Activated B cell treated with CpG ODN at 0.5 μM for 24 hours (primary cell): ENCODE measurements at regions of chrX and their contacts with region 1.

Region 1: DNA sequence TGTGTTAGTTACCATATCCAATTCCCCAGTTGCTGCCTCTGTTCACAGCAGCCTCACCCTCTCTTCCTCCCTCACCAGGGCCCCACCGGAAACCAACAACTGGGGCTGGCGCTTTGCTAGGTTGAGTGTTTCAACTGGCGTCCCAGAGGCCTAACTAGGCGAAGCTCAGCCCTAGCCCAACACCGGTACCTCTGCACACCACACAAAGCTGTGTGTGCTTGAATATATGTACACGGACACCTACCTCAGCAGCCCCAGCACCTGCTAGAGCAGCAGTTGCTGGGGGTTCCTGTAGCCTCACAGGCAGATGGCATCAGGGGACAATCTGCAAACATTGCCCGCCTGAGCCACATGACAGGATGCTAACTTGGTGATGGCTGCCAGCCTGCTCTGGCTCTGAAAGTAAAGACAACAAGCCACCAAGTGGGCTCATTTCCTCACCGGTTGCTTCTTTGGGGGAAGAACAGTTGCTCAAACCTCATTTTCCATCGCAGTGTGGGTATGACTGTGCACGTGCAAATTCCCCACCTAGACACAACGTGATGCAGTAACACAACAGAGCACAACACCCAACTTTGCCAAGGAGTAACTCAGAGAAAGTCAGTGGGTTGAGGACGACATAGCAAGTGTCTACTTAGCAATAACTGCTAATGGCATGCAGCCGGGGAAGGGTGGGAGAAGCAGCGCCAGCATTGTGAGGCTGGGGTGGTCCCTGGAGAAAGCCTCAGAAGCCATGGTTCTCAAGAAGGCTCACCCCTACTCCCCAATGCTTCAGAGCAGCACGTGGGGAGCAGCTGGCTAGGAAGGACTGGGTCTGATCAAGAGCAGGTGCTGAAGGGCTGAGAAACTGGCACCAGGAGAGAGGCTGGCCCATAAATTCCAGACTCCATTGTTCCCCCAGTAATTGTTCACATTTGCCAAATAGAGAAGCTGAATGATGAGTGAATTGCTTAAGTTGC is 139.5 kb downstream of the SH3KBP1 start:
- DNase-seq: peak; percentile 43
- ATAC-seq: peak; percentile 65
- H3K4me3 Mint-ChIP-seq: peak overlapping the region; percentile 35
- H3K27ac Mint-ChIP-seq: peak overlapping the region; percentile 92
- H3K4me1 Mint-ChIP-seq: peaks cover 98% of the 10 kb centered on the region
- H3K27me3 Mint-ChIP-seq: no peaks in the 10 kb centered on the region
- CTCF ChIP-seq: no peak

Region 2: DNA sequence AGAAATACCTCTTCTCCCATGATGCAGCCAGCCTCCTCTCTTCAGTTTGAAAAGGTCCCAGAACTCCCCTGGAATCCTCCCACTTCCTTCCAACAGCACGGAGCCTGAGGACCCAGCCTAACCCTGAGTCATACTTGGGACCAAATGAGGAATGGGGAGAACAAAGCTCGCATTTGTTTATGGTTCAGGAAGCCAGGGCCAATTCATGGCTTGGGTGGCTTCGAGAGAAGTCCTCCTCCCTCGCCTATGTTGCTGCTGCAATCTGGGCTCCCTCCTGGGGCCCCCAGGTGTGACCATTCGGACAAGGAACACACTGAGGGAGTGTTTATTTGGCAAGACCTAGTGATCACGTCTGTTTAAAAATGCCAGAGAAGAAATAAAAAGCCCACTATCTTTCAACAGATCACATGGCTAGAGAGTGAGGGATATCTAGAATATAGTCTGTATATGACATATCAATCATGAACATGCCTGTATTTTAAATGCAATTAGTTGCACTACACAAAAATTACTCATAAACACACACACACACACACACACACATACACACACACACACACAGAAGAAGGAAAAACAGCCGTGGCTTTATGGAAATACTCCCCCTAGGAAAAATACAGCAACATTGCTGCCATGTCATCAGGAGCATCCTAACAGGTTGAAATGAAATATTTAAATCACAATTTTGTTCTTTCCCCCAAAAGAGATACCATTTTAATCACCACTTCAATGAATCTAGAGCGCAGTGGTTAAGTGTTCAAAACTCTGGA is 76.9 kb before region 1 on chrX:
- CTCF ChIA-PET with region 1: no interaction called
- POLR2A ChIA-PET with region 1: no interaction called
- intact Hi-C with region 1: no loop called
- DNase-seq: no peak
- ATAC-seq: no peak
- H3K4me3 Mint-ChIP-seq: no peak overlapping the region
- H3K27ac Mint-ChIP-seq: no peak overlapping the region
- H3K4me1 Mint-ChIP-seq: peaks cover 23% of the 10 kb centered on the region
- H3K27me3 Mint-ChIP-seq: no peaks in the 10 kb centered on the region
- CTCF ChIP-seq: no peak

Region 3: DNA sequence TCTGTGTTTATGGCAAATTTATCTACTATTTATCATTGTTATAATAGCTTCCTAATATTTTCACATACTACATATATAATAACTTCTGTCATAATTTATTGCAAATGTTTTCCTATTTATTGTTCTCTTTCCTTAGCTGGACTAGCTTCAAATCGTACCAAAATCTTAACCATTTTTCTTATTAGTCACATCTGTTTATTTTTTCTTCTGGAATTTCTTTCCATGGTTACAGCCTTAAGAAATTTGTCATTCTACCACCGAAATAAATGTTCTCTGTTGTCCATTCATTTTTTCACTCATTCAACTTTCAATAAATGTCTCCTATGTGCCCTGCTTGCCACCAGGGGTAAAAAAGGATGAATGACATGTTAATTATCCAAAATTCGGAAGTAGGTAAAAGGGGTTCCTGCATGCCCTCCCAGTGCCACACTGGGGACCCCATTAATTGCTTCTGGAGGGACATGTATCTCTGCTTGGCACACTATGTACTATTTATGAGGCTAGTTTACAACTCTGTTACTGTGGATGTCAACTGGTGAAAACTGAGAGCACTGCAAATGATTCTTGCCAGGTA is 42.6 kb before region 1 on chrX:
- CTCF ChIA-PET with region 1: no interaction called
- POLR2A ChIA-PET with region 1: no interaction called
- intact Hi-C with region 1: no loop called
- DNase-seq: no peak
- ATAC-seq: no peak
- H3K4me3 Mint-ChIP-seq: no peak overlapping the region
- H3K27ac Mint-ChIP-seq: no peak overlapping the region
- H3K4me1 Mint-ChIP-seq: peaks cover 15% of the 10 kb centered on the region
- H3K27me3 Mint-ChIP-seq: no peaks in the 10 kb centered on the region
- CTCF ChIP-seq: no peak

Region 4: DNA sequence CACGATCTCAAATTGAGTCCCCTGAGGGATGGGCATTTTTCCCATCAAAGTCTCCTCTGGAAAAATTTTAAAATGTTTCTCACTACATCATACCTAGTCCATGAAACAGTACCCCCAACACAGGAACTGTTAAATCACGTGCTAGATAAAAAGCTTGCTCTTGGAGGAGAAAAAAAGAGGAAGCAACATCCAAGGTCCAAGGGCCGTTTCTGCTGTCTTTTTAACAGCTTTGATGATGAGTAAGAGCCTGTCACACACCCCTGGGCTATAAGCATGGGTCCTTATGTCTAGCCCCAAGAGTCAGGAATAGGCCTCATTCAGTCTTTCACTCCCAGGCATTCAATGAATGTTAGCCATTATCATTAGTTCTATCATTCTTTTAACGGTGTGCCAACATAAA is 10.6 kb after region 1 on chrX:
- CTCF ChIA-PET with region 1: interaction called, 3 read pairs
- POLR2A ChIA-PET with region 1: interaction called, 6 read pairs
- intact Hi-C with region 1: loop called (anchors 1 kb)
- DNase-seq: no peak
- ATAC-seq: peak; percentile 85
- H3K4me3 Mint-ChIP-seq: no peak overlapping the region
- H3K27ac Mint-ChIP-seq: peak overlapping the region; percentile 72
- H3K4me1 Mint-ChIP-seq: peaks cover 77% of the 10 kb centered on the region
- H3K27me3 Mint-ChIP-seq: no peaks in the 10 kb centered on the region
- CTCF ChIP-seq: no peak

Region 5: DNA sequence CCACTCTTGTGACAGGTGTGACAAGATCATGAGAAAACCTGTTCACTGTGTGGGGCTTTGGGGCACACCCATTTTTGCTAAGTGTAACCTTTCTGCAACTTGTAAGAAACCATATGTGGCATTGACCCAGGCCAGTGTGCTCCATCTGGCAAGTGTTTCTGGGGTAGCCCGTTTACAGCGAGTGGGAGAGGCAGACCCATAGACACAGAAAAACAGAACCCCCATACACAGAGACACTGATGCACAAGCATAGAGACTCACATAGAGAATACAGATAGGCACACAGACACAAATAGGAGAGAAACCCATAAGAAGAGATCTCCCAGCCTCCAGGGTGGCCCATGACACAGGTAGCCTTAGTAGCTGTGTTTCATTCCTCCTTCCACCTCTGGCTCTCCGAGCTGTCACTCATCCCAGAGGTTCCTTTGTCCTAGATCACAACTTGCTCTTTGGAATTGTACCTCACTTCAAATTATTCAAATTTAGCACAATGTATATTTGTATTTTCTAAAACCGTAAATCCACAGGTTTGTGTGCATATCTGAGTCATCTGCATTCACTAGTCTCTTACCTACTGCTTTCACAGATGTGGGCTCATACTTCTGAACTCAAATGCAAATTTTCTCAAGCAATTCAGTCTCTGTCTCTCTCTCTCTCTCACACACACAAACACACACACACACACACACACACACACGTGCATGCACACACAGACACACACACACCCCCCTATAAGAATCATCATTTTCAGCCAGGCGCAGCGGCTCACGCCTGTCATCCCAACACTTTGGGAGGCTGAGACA is 25.1 kb after region 1 on chrX:
- CTCF ChIA-PET with region 1: no interaction called
- POLR2A ChIA-PET with region 1: interaction called, 8 read pairs
- intact Hi-C with region 1: loop called (anchors 2 kb)
- DNase-seq: no peak
- ATAC-seq: peak; percentile 69
- H3K4me3 Mint-ChIP-seq: peak overlapping the region; percentile 57
- H3K27ac Mint-ChIP-seq: peak overlapping the region; percentile 89
- H3K4me1 Mint-ChIP-seq: peaks cover 74% of the 10 kb centered on the region
- H3K27me3 Mint-ChIP-seq: no peaks in the 10 kb centered on the region
- CTCF ChIP-seq: no peak

Region 6: DNA sequence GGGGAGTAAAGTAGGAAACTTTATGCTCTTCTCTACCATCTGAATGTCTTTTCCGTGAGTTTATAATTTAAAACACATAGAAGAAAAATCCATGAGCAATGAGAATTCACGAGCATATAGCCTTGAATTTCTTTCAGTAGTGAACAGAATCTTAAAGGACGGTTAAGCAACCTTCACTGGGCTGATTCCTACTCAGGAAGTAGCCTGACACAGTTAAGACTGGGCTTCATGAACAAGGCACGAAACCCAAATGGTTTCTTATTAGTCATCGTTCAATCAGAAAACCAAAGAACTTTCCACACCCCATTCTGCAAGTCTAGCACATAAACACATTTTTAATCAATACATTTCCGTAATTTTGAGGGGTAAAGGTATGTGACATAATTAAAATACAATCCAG is 43.6 kb after region 1 on chrX:
- CTCF ChIA-PET with region 1: no interaction called
- POLR2A ChIA-PET with region 1: interaction called, 6 read pairs
- intact Hi-C with region 1: loop called (anchors 5 kb)
- DNase-seq: no peak
- ATAC-seq: peak; percentile 58
- H3K4me3 Mint-ChIP-seq: no peak overlapping the region
- H3K27ac Mint-ChIP-seq: peak overlapping the region; percentile 72
- H3K4me1 Mint-ChIP-seq: peaks cover 56% of the 10 kb centered on the region
- H3K27me3 Mint-ChIP-seq: no peaks in the 10 kb centered on the region
- CTCF ChIP-seq: no peak

Region 7: GRCh38 chrX:20060961-20061748 is 313.2 kb after region 1 on chrX:
- CTCF ChIA-PET with region 1: no interaction called
- POLR2A ChIA-PET with region 1: no interaction called
- intact Hi-C with region 1: loop called (anchors 5 kb)
- DNase-seq: peak; percentile 59
- ATAC-seq: peak; percentile 94
- H3K4me3 Mint-ChIP-seq: peak overlapping the region; percentile 41
- H3K27ac Mint-ChIP-seq: peak overlapping the region; percentile 89
- H3K4me1 Mint-ChIP-seq: peaks cover 32% of the 10 kb centered on the region
- H3K27me3 Mint-ChIP-seq: no peaks in the 10 kb centered on the region
- CTCF ChIP-seq: no peak